ENCODE measurements at regions of chr15 and their contacts with region 1.

Region 1: GRCh38 chr15:40217159-40217824 is 21.6 kb upstream of the PAK6 start:
- DNase-seq: peak; percentile 26
- ATAC-seq: peak; percentile 95
- H3K4me3 ChIP-seq: no peak overlapping the region
- H3K27ac ChIP-seq: no peak overlapping the region
- H3K4me1 ChIP-seq: no peaks in the 10 kb centered on the region
- H3K27me3 ChIP-seq: no peaks in the 10 kb centered on the region
- CTCF ChIP-seq: peak; percentile 72 to 87 (median 82)
- EP300 ChIP-seq: no peak
- POLR2A ChIP-seq: no peak
- RAD21 ChIP-seq: peak; percentile 92

Region 2: DNA sequence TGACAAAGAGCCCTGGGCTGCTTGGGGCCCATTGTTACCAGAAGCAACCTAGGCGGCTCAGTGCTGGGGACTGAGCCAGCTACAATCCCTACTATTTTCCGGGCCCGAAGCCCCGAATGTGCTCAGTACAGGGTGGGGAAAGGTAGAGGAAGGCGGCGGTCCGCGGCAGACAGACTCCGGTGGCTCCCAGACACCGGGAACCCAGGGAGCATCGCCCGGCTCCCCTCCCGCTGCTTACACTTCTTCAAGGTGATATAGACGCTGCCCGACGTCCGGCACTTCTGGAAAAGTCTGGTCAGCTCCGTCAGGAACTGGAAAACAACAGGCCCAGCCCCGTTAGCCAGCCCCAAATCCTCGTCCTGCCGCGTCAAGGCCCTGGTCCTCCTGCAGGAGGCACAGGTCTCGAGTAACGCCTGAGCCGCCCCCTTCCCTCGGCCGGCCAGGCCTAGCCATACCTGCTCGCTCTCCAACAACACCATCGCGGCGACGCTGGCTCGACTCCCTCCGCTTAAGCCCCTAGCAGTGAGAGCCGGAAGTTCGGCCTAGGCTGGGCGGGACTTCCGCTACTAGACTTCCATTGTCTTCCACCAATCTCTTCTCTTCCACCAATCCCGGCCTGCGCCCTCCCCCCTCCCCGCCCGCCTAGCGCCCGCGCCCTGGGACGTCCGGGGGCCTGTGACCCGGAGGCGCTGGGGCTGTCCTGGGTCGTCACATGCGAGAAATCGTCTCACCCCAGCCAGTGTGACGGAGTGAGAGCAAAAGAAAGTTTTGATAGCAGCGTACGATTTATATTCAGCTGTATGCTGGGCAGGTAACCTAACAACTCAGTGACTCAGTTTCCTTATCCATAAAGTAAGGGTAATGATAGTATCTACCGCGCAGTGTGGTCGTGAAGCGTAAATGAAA is 178.4 kb before region 1 on chr15 and contains the start of gene SRP14:
- CTCF ChIA-PET with region 1: interaction called, 81 read pairs
- POLR2A ChIA-PET with region 1: no interaction called
- RAD21 ChIA-PET with region 1: interaction called, 57 read pairs
- SMC1A ChIA-PET with region 1: interaction called, 58 read pairs
- in situ Hi-C with region 1: no loop called
- intact Hi-C with region 1: loop called (anchors 2 kb)
- DNase-seq: peak; percentile 75
- ATAC-seq: peak; percentile 95
- H3K4me3 ChIP-seq: peak within 1 kb of the TSS; percentile 89
- H3K27ac ChIP-seq: peak within 1 kb of the TSS; percentile 79
- H3K4me1 ChIP-seq: peaks cover 9% of the 10 kb centered on the region
- H3K27me3 ChIP-seq: no peaks in the 10 kb centered on the region
- CTCF ChIP-seq: 0 out of 6 replicates have a peak, but pooled peaks of 1 of the 3 experiments have one; percentile 1
- EP300 ChIP-seq: 0 out of 4 replicates have a peak, but pooled peaks of 1 of the 2 experiments have one; percentile 3
- POLR2A ChIP-seq: peak; percentile 98
- RAD21 ChIP-seq: no peak
- polyA plus RNA-seq, gene SRP14: 1,041 to 1,182 TPM

Region 3: DNA sequence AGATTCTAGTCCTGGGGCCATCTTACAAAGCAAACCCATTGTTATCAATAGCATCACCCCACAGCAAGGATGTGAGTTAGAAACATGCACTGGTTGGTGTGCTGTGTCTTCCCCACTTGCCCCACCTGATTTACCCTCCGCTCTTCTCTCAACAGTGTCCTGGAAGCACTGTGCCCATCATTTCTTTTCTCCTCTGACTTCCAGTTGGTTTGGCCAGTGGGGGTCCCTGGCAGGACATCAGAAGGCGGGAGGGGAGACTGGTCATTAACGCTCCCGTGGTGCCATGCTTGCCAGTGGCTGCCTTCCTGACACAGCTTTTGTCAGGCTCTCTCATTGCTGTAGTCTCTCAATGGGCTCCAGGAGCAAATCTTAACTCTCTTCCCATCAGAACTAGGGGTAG is 68.0 kb before region 1 on chr15:
- CTCF ChIA-PET with region 1: no interaction called
- POLR2A ChIA-PET with region 1: no interaction called
- RAD21 ChIA-PET with region 1: no interaction called
- SMC1A ChIA-PET with region 1: no interaction called
- in situ Hi-C with region 1: no loop called
- intact Hi-C with region 1: no loop called
- DNase-seq: no peak
- ATAC-seq: no peak
- H3K4me3 ChIP-seq: no peak overlapping the region
- H3K27ac ChIP-seq: no peak overlapping the region
- H3K4me1 ChIP-seq: no peaks in the 10 kb centered on the region
- H3K27me3 ChIP-seq: no peaks in the 10 kb centered on the region
- CTCF ChIP-seq: no peak
- EP300 ChIP-seq: no peak
- POLR2A ChIP-seq: no peak
- RAD21 ChIP-seq: no peak

Region 4: DNA sequence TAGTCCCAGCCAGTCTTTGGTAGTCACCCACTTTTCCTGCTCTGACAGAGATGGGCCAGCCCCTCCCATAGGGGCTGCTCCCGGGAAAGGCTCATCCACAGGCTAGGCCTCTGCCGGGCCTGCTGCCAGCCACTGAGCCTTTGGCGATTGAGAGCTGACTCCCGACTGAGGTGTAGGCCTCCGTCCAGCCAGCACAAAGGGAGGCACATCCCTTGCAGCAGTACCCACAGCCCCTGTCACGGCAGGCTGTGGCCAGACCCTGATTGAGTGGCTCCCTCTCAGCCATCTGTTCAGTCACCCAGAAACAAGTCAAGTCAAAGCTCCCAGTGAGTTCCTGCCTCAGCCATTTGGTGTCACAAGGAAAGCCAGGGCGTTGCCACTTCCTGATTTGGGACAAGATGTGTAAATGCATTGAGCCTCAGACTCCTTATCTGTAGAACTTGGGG is 15.4 kb after region 1 on chr15:
- CTCF ChIA-PET with region 1: interaction called, 37 read pairs
- POLR2A ChIA-PET with region 1: interaction called, 6 read pairs
- RAD21 ChIA-PET with region 1: interaction called, 13 read pairs
- SMC1A ChIA-PET with region 1: interaction called, 24 read pairs
- in situ Hi-C with region 1: no loop called
- intact Hi-C with region 1: no loop called
- DNase-seq: no peak
- ATAC-seq: no peak
- H3K4me3 ChIP-seq: no peak overlapping the region
- H3K27ac ChIP-seq: no peak overlapping the region
- H3K4me1 ChIP-seq: peaks cover 6% of the 10 kb centered on the region
- H3K27me3 ChIP-seq: no peaks in the 10 kb centered on the region
- CTCF ChIP-seq: no peak
- EP300 ChIP-seq: no peak
- POLR2A ChIP-seq: no peak
- RAD21 ChIP-seq: no peak

Region 5: DNA sequence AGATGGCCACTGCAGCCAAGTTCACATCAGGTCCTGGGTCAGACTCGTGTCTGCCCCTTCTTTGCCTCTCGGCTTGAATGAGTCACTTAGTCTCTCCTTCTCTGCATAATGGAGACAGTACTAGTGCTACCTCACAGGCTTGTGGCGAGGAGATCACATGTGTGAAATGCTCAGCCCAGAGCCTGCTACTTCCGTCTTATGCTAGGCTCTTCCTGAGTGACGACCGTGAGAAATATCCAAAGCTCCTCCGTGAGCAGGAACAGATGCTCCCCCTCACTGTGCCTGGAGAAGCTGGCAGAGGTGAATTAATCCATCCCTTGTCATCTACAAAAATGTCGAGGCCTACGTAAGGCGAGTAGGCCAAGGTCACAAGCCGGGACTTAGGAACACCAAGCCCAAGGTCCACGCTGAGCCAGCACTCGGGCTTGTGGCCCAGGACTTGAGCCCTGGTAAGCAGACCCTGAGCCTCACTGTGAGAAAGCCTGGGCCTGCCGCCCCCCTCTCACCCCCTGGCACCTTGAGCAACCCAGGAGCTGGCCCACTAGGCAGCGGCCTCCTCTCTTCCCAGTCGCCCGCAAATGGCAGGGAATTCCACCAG is 39.4 kb after region 1 on chr15:
- CTCF ChIA-PET with region 1: interaction called, 11 read pairs
- POLR2A ChIA-PET with region 1: no interaction called
- RAD21 ChIA-PET with region 1: interaction called, 5 read pairs
- SMC1A ChIA-PET with region 1: interaction called, 5 read pairs
- in situ Hi-C with region 1: no loop called
- intact Hi-C with region 1: no loop called
- DNase-seq: no peak
- ATAC-seq: peak; percentile 33
- H3K4me3 ChIP-seq: no peak overlapping the region
- H3K27ac ChIP-seq: no peak overlapping the region
- H3K4me1 ChIP-seq: peaks cover 3% of the 10 kb centered on the region; the same call in 1 of the 2 replicates
- H3K27me3 ChIP-seq: peaks cover 0 to 3% of the 10 kb centered on the region in 2 experiments; a peak in 3 of 4 replicates
- CTCF ChIP-seq: no peak
- EP300 ChIP-seq: no peak
- POLR2A ChIP-seq: no peak
- RAD21 ChIP-seq: no peak

Region 6: DNA sequence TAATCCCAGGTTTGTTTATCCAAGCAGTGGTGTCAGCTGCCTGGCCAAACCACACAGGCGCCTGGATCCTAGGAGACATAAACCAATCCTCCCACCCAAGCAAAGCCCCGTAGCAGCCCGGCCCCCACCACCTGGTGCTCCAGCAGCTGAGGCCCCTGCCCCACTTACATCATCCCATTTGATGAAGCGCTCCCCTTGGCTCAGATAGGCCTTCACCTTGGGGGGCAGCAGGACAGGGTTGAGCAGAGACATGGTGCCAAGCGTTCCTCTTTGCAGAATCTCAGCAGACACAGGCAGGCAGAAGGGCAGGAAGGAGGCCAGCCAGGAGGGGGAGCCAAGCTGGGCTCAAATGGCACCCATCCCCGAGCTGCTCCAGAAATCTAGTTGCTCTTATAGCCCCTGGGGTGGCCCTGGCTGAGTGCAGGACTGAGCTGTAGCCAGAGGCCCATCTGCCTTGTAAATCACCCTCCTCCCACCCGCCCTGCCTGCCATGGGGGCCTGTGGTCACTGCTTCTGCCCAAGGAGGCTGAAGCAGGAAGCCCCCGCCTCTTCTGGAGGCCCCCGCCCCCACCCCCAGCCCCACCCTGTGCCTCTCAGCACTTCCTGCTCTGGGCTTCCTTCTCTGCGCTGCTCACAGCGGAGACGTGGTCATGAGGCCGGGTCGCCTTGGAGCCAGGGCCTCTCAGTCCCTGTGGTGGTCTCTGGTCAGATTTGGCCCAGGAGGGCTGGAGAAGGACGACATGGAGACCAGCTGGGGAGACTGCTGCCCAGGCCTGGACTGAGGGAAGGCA is 90.3 kb after region 1 on chr15 and contains the start of gene PLCB2:
- CTCF ChIA-PET with region 1: interaction called, 31 read pairs
- POLR2A ChIA-PET with region 1: no interaction called
- RAD21 ChIA-PET with region 1: interaction called, 4 read pairs
- SMC1A ChIA-PET with region 1: interaction called, 7 read pairs
- in situ Hi-C with region 1: no loop called
- intact Hi-C with region 1: no loop called
- DNase-seq: peak; percentile 16
- ATAC-seq: peak; percentile 78
- H3K4me3 ChIP-seq: peak within 1 kb of the TSS; percentile 80
- H3K27ac ChIP-seq: peak within 1 kb of the TSS; percentile 78
- H3K4me1 ChIP-seq: peaks cover 12% of the 10 kb centered on the region
- H3K27me3 ChIP-seq: peaks cover 0 to 1% of the 10 kb centered on the region in 2 experiments; a peak in 1 of 4 replicates
- CTCF ChIP-seq: peak; percentile 27 to 46 (median 39); a peak in 5 of 6 replicates
- EP300 ChIP-seq: no peak
- POLR2A ChIP-seq: peak; percentile 87
- RAD21 ChIP-seq: no peak
- polyA plus RNA-seq, gene PLCB2: 1.3 to 2.4 TPM

Region 7: DNA sequence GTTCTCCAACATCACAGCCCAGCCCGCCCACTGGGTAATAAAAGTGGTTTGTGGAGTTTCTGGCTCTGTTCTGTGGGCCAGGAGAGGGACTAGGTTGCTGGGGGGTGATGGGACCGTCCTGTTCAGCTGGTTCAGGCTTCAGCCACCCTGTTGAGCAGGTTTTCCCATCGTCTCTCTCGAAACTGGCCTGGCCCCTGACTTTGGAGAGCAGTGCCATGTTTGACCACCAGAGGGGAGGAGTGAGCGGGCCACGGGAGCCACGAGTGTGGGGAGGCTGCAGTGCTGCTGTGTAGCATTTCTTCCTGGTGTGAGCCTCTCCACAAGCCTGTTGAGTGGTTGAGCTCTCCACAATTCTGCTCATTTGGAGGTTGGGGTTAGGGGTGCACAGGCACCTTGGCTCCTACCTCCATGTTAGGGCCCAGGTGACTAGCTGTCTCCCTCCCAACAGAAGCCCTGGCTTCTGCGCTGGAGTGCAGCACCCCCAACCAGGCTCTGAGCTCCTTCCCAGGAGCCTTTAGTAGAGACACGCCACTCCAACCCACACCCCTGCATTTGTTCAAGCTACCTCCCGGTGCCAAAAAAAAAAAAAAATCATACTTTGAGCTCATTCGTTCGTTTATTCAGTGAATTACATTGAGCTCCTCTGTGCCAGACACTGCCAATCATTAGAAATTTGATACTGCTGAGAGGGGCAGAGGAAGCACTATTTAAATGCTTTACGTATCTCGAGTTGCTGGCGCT is 640.5 kb after region 1 on chr15:
- CTCF ChIA-PET with region 1: no interaction called
- POLR2A ChIA-PET with region 1: no interaction called
- RAD21 ChIA-PET with region 1: no interaction called
- SMC1A ChIA-PET with region 1: no interaction called
- in situ Hi-C with region 1: no loop called
- intact Hi-C with region 1: no loop called
- DNase-seq: no peak
- ATAC-seq: peak; percentile 89
- H3K4me3 ChIP-seq: no peak overlapping the region
- H3K27ac ChIP-seq: no peak overlapping the region
- H3K4me1 ChIP-seq: peaks cover 4% of the 10 kb centered on the region
- H3K27me3 ChIP-seq: no peaks in the 10 kb centered on the region
- CTCF ChIP-seq: peak; percentile 95 to 99 (median 98)
- EP300 ChIP-seq: no peak
- POLR2A ChIP-seq: no peak
- RAD21 ChIP-seq: peak; percentile 95